Vagina (tissue), 2 donors: ENCODE measurements at regions of chr9 and their contacts with region 1.

Region 1: GRCh38 chr9:124040935-124041816 is 29.6 kb downstream of the LHX2 start:
- DNase-seq: no peak
- H3K4me3 ChIP-seq: peak overlapping the region; percentile 31 to 35
- H3K27ac ChIP-seq: no peak overlapping the region
- H3K4me1 ChIP-seq: peaks cover 37% of the 10 kb centered on the region
- H3K27me3 ChIP-seq: no peaks in the 10 kb centered on the region
- CTCF ChIP-seq: peak; percentile 65 to 94 (median 76)
- POLR2A ChIP-seq: no peak

Region 2: DNA sequence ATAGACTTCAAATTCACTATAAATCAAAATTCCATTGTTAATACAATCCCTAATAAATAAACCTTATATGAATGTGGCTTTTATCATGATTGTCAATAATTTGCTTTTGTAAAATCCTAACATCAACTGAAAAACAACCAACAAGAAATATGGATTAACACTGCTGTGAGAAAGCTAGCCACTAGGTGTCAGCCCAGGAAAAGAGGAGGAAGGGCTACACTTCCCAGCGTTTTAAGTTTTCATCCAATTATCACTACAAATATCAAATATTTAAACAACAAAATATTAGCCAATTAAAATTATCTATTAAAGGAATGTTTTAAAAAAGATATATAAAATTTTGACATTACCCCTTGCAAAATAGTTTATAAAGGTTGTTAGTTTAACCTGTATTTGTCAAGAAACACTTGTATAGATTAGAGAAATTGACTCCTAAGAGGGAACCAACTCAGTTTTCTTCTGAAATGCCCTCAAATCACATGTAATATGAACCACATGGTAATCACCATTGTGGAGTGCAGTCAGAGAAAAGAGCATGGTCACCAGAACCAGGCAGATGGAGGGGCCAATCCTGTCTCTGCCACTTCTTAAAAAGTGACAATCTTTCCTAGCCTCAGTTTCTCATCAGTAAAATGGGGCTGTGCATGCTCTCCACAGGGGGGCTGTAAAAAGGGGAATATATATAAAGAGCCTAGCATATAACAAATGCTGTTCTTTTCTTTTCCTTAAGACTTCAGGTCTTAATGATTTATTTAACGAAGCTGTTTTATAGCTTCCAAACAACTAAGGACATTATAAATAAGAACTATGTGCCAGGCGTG is 497.0 kb before region 1 on chr9:
- intact Hi-C with region 1: loop called (anchors 10 kb)
- DNase-seq: no peak
- H3K4me3 ChIP-seq: no peak overlapping the region
- H3K27ac ChIP-seq: no peak overlapping the region
- H3K4me1 ChIP-seq: no peaks in the 10 kb centered on the region
- H3K27me3 ChIP-seq: no peaks in the 10 kb centered on the region
- CTCF ChIP-seq: peak; percentile 72 to 75 (median 72)
- POLR2A ChIP-seq: no peak

Region 3: GRCh38 chr9:124011420-124012301 is 29.5 kb before region 1 on chr9 and contains the start of gene LHX2:
- intact Hi-C with region 1: no loop called
- DNase-seq: no peak
- H3K4me3 ChIP-seq: peak within 1 kb of the TSS; percentile 9 to 37
- H3K27ac ChIP-seq: no peak within 1 kb of the TSS
- H3K4me1 ChIP-seq: peaks cover 55% of the 10 kb centered on the region
- H3K27me3 ChIP-seq: peaks cover 37% of the 10 kb centered on the region
- CTCF ChIP-seq: no peak
- POLR2A ChIP-seq: no peak
- total RNA-seq, gene LHX2: not detected